Right cardiac atrium (tissue), 5 donors: ENCODE measurements at regions of chr12 and their contacts with region 1.

Region 1: GRCh38 chr12:130335517-130336392 is 1.9 kb upstream of the PIWIL1 start:
- DNase-seq: no peak
- ATAC-seq: no peak
- H3K4me3 ChIP-seq: no peak overlapping the region
- H3K27ac ChIP-seq: no peak overlapping the region
- H3K4me1 ChIP-seq: peaks cover 1% of the 10 kb centered on the region
- H3K27me3 ChIP-seq: no peaks in the 10 kb centered on the region

Region 2: DNA sequence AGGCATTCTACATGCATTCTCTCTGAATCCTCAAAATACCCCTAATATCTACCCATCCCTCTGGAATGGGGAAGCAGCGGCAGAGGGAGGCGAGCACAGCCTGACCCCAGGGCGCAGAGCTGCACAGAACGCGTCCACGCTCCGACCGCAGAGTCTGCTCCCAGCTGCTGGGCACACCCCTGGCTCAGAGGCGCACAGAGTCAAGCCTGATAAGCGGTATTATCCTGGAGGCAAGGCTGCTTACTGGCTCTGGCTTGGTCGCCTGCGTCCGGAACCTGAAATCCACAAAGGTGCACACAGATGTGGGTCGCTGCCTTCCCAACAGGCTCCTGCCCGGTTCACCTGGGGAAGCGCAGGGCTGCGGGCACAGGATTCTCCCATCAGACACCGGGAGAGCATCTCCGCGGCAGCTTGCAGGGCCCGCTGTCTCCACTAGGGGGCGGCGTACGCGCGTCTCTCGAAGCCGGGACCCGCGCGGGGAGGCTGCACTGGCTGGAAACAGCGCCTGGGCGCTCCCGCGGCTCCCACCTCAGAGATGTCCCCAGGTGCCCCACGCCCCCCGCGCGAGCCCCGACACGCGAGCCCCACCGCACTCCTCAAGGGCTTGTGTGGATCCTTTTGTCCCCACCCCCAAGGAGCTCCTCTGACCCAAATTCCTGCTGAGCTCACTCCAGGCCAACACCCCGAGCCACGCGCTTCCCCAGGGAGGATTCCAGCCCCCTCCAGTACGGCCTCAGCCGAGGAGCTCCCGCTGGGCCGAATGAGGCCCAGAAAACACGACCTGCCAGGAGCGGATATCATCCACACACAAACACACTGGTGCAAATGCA is 293.6 kb before region 1 on chr12:
- intact Hi-C with region 1: loop called in 3 of 4 experiments (anchors 2 to 5 kb)
- DNase-seq: peak; percentile 44 to 78 (median 68)
- ATAC-seq: peak; percentile 31 to 43
- H3K4me3 ChIP-seq: no peak overlapping the region
- H3K27ac ChIP-seq: no peak overlapping the region
- H3K4me1 ChIP-seq: no peaks in the 10 kb centered on the region
- H3K27me3 ChIP-seq: no peaks in the 10 kb centered on the region

Region 3: GRCh38 chr12:130049666-130050065 is 286.1 kb before region 1 on chr12:
- intact Hi-C with region 1: loop called (anchors 2 to 5 kb)
- DNase-seq: no peak
- ATAC-seq: no peak
- H3K4me3 ChIP-seq: no peak overlapping the region
- H3K27ac ChIP-seq: no peak overlapping the region
- H3K4me1 ChIP-seq: no peaks in the 10 kb centered on the region
- H3K27me3 ChIP-seq: no peaks in the 10 kb centered on the region

Region 4: DNA sequence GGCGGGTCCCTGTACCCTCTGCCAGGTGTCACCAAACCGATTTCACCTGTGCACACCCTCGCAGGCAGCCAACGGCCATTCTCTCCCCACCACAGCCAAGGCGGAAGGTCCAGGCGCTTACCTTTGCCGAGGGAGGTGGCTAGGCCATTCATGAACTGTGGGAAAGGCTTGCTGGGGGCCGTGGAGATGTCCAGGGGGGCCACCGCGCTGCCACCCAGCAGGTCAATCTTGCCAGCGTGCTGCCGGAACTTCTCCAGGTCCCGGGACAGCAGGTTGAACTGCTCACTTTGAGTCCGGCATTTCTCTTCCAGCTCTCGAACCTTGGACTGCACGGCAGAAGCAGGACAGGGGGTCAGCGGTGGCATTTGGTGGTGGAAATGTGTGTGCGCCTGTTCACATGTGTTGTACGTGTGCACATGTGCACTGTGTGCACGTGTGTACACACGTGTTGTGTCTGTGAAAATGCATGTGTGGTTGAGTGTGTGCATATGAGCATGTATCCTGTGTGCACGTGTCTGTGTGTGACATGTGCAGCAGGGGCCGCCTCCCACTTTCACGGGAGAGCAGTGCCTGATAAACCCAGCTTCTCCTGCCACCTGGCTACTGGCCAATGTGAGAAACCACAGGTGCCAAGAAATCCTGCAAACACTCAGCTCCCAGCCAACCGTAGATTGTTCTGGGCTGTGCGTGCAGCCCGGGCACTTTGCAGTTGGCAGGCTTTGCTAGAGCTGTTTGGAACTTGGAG is 120.8 kb after region 1 on chr12:
- intact Hi-C with region 1: no loop called
- DNase-seq: peak; percentile 53 to 83 (median 77)
- ATAC-seq: peak; percentile 74 to 83
- H3K4me3 ChIP-seq: no peak overlapping the region
- H3K27ac ChIP-seq: no peak overlapping the region
- H3K4me1 ChIP-seq: no peaks in the 10 kb centered on the region
- H3K27me3 ChIP-seq: no peaks in the 10 kb centered on the region

Region 5: GRCh38 chr12:130482448-130482847 is 146.7 kb after region 1 on chr12:
- intact Hi-C with region 1: no loop called
- DNase-seq: no peak
- ATAC-seq: no peak
- H3K4me3 ChIP-seq: no peak overlapping the region
- H3K27ac ChIP-seq: no peak overlapping the region
- H3K4me1 ChIP-seq: no peaks in the 10 kb centered on the region
- H3K27me3 ChIP-seq: no peaks in the 10 kb centered on the region